ENCODE measurements at regions of chr21 and their contacts with region 1.

Region 1: DNA sequence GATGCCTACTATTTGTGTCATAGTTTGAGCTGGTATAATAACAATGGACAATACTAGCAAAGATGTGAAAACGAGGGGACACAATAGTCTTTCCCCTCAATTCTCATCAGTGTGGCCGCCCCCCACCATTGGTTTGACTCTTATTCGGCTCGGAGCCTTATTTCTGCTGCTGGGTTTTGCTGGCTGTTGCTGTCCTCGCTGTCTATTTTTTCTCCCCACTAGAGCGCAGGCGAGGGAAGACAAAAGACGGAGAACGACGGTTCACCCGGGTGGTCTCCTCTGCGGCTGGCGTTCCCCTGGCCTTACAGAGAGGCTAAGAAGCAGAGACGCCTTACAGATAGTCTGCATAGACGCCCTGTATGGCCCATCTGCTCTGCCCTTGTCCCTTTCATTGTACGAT is 19.4 kb downstream of the CLIC6 start:
- DNase-seq: peak in 1 of 2 donors; percentile 69
- ATAC-seq: peak in 2 of 4 donors; percentile 39 to 80
- H3K4me3 ChIP-seq: no peak overlapping the region
- H3K27ac ChIP-seq: no peak overlapping the region
- H3K4me1 ChIP-seq: peaks cover 26% of the 10 kb centered on the region
- H3K27me3 ChIP-seq: no peaks in the 10 kb centered on the region
- CTCF ChIP-seq: no peak

Region 2: DNA sequence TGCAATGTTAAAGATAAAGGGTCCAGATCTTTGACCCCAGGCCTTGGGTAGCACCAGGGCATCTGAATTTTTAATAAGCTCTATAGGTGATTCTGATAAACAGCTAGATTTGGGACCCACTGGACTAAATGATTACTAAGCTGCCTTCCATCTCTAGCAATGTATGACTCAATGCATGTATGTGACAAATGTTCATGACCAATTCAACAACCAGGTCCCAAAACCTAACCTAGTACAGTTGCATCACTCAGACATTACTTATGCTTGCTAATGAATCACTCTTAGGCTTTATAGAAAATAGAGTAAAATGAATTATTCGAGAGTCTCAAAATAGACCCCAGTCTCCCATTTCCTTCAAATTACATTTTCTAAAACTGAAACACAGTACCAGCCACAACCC is 108.7 kb before region 1 on chr21:
- intact Hi-C with region 1: no loop called
- DNase-seq: no peak
- ATAC-seq: peak in 2 of 4 donors; percentile 35 to 43
- H3K4me3 ChIP-seq: no peak overlapping the region
- H3K27ac ChIP-seq: peak overlapping the region; percentile 59
- H3K4me1 ChIP-seq: peaks cover 36% of the 10 kb centered on the region
- H3K27me3 ChIP-seq: no peaks in the 10 kb centered on the region
- CTCF ChIP-seq: no peak

Region 3: GRCh38 chr21:34614633-34615486 is 73.3 kb before region 1 on chr21 and contains the start of gene RCAN1:
- intact Hi-C with region 1: no loop called
- DNase-seq: peak; percentile 91 to 95
- ATAC-seq: peak; percentile 98 to 99 (median 98)
- H3K4me3 ChIP-seq: peak within 1 kb of the TSS; percentile 77
- H3K27ac ChIP-seq: peak within 1 kb of the TSS; percentile 83
- H3K4me1 ChIP-seq: peaks cover 17% of the 10 kb centered on the region
- H3K27me3 ChIP-seq: no peaks in the 10 kb centered on the region
- CTCF ChIP-seq: no peak
- total RNA-seq, gene RCAN1: 24.9 to 38.4 (median 26.1) TPM

Region 4: DNA sequence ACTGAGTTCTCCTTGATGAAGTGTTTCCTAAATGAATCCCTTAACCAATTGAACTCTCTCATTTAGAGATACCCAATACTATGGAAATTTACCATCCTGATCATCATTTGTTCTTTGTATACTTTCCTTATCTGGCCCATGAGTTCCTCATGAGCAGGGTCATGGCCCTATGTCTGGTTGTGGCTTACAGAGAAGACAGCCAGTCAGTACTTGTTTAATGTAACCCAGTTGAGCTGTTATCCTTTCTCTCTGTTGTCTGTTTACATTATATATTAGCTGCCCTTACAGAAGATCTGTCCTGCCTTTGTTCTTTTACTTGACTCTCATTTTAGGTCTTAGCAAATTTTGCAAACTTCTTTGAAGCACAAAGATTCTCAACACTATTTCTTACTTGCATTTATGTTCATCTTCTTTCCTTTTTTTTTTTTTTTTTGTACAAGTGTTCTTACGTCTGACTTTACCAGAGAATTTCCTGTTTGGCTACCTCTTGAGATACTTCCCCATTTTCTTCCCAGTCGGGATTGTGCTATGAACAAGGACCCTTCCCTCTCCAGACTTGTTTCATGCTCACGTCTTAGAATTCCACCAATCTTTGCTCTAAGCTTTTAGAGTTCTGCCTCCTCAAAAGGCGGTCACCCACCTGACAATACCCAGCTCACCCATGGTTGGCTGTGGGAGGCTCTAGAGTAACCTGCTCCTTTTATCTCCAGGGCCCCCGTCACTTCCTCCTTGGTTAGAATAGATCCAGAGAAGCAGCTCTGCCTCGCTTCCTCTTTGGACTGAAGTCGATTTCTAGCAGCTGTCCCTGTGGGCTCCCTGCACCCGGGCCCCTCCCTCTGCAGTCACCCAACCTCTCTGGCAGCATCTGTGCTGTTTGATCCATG is 414.6 kb after region 1 on chr21:
- intact Hi-C with region 1: no loop called
- DNase-seq: peak; percentile 16 to 54
- ATAC-seq: peak in 1 of 4 donors; percentile 37
- H3K4me3 ChIP-seq: no peak overlapping the region
- H3K27ac ChIP-seq: no peak overlapping the region
- H3K4me1 ChIP-seq: no peaks in the 10 kb centered on the region
- H3K27me3 ChIP-seq: no peaks in the 10 kb centered on the region
- CTCF ChIP-seq: no peak

Region 5: GRCh38 chr21:35840197-35840799 is 1152.2 kb after region 1 on chr21:
- intact Hi-C with region 1: loop called (anchors 5 kb)
- DNase-seq: peak in 1 of 2 donors; percentile 27
- ATAC-seq: peak; percentile 66 to 85 (median 78)
- H3K4me3 ChIP-seq: no peak overlapping the region
- H3K27ac ChIP-seq: no peak overlapping the region
- H3K4me1 ChIP-seq: peaks cover 11% of the 10 kb centered on the region
- H3K27me3 ChIP-seq: no peaks in the 10 kb centered on the region
- CTCF ChIP-seq: peak; percentile 88

Region 6: DNA sequence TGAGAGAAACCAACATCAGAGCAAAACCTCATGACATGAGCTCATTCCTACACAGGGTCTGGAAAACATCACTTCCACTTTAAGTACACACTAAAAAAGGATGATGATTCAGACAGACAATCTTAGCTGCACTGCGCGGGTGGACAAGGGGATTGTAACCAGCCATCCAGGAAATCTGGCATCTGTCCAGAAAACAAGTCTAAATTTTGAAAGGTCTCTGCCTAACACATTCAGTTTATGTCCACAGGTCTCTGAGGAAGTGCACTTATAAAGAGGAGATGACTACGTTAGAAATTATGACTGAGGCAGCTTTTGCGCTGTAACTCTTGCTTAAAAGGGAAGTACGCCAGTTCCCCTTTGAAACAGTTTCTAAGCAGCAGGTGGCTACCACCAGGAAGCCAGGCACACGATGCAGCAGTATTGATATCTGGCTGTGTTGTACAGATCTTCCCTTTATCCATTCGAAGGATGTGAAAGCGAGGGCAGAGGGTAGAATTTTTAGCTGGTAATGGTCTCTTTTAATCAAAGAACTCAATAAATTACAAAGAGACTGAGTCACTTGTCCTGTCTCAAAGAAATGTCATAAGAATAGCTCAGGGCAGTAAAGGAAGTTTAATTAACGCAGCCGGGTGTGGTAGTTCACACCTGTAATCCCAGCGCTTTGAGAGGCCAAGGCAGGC is 1244.2 kb after region 1 on chr21:
- intact Hi-C with region 1: loop called in 1 of 2 experiments (anchors 10 kb)
- DNase-seq: peak; percentile 58 to 61
- ATAC-seq: peak; percentile 83 to 92 (median 88)
- H3K4me3 ChIP-seq: no peak overlapping the region
- H3K27ac ChIP-seq: peak overlapping the region; percentile 65
- H3K4me1 ChIP-seq: peaks cover 9% of the 10 kb centered on the region
- H3K27me3 ChIP-seq: peaks cover 0 to 6% (median 2%) of the 10 kb centered on the region in 3 donors
- CTCF ChIP-seq: no peak

Region 7: GRCh38 chr21:36028127-36029069 is 1340.3 kb after region 1 on chr21:
- intact Hi-C with region 1: loop called in 1 of 2 experiments (anchors 5 kb)
- DNase-seq: peak; percentile 62 to 81
- ATAC-seq: peak; percentile 86 to 95 (median 94)
- H3K4me3 ChIP-seq: no peak overlapping the region
- H3K27ac ChIP-seq: no peak overlapping the region
- H3K4me1 ChIP-seq: no peaks in the 10 kb centered on the region
- H3K27me3 ChIP-seq: no peaks in the 10 kb centered on the region
- CTCF ChIP-seq: peak; percentile 90

Measured in psoas muscle (tissue), 8 donors.